BJ (cell line): ENCODE measurements at regions of chr10 and their contacts with region 1.

Region 1: GRCh38 chr10:132452631-132453469 is 55.9 kb downstream of the PWWP2B start:
- DNase-seq: no peak
- H3K4me3 ChIP-seq: no peak overlapping the region
- H3K27me3 ChIP-seq: no peaks in the 10 kb centered on the region; the same call in 1 of the 2 replicates
- CTCF ChIP-seq: peak; percentile 77

Region 2: GRCh38 chr10:132223156-132223590 is 229.7 kb before region 1 on chr10:
- CTCF ChIA-PET with region 1: interaction called, 20 read pairs
- POLR2A ChIA-PET with region 1: no interaction called
- DNase-seq: peak; percentile 11
- H3K4me3 ChIP-seq: no peak overlapping the region
- H3K27me3 ChIP-seq: no peaks in the 10 kb centered on the region
- CTCF ChIP-seq: peak; percentile 100

Region 3: GRCh38 chr10:132387764-132388210 is 65.1 kb before region 1 on chr10:
- CTCF ChIA-PET with region 1: interaction called, 15 read pairs
- POLR2A ChIA-PET with region 1: no interaction called
- DNase-seq: no peak
- H3K4me3 ChIP-seq: no peak overlapping the region
- H3K27me3 ChIP-seq: peaks cover 2% of the 10 kb centered on the region; the same call in 1 of the 2 replicates
- CTCF ChIP-seq: peak; percentile 68

Region 4: GRCh38 chr10:132469197-132469884 is 16.5 kb after region 1 on chr10:
- CTCF ChIA-PET with region 1: no interaction called
- POLR2A ChIA-PET with region 1: no interaction called
- DNase-seq: no peak
- H3K4me3 ChIP-seq: no peak overlapping the region
- H3K27me3 ChIP-seq: 0 out of 2 replicates have a peak, but pooled peaks cover 2% of the 10 kb centered on the region
- CTCF ChIP-seq: no peak

Region 5: GRCh38 chr10:132554991-132555647 is 102.3 kb after region 1 on chr10:
- CTCF ChIA-PET with region 1: no interaction called
- POLR2A ChIA-PET with region 1: no interaction called
- DNase-seq: no peak
- H3K4me3 ChIP-seq: no peak overlapping the region
- H3K27me3 ChIP-seq: no peaks in the 10 kb centered on the region
- CTCF ChIP-seq: no peak

Region 6: DNA sequence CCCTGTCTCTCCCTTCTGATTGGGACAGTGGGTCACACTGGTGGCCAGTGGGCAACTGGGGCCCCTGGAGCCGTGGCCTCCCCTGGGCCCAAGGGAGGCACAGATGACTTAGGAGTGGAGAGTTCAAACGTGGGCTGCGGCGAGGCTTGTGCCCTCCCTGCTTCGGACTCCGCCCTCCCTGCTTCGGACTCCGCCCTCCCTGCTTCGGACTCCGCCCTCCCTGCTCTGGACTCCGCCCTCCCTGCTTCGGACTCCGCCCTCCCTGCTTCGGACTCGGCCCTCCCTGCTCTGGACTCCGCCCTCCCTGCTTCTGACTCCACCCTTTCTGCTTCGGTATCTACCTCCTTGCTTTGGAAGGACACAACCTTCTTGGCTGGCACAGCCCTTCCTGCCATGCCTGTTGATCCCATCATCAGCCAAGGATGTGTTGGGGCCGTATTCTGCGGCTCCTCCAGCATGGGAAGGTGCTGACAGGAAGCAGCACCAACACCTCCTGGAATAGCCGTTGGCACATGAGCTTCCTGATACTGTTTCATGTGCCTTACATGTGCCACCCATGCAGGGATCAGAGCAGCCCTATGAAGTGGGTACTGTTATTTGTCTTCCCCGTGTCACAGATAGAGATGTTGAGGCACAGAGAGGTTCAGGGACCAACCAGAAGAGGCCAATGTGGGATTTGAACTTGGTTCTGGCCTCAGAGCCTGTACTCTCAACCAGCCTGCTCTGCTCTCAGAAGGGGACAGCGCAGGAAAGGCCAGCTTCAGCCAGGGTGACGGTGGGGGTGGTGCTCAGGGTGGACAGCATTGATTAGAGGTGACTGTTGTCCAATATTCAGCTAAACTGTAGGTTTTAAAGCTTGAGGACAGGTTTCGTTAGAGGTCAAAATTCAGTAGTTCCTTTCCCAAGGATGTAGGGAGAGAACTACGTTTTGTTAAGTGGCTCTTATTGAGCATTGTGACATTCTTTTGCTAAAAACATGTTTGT is 218.6 kb after region 1 on chr10:
- CTCF ChIA-PET with region 1: interaction called, 3 read pairs
- POLR2A ChIA-PET with region 1: interaction called, 16 read pairs
- DNase-seq: no peak
- H3K4me3 ChIP-seq: no peak overlapping the region
- H3K27me3 ChIP-seq: no peaks in the 10 kb centered on the region
- CTCF ChIP-seq: no peak